CD4-positive, alpha-beta T cell (primary cell): ENCODE measurements at regions of chr15 and their contacts with region 1.

Region 1: GRCh38 chr15:45402162-45402954 is 24.0 kb upstream of the GATM start:
- DNase-seq: peak; percentile 93 to 99 (median 96)
- ATAC-seq: peak; percentile 93
- H3K4me3 ChIP-seq: peak overlapping the region; percentile 77
- H3K4me3 Mint-ChIP-seq: peak overlapping the region; percentile 97
- H3K27ac ChIP-seq: peak overlapping the region; percentile 72 to 88
- H3K27ac Mint-ChIP-seq: peak overlapping the region; percentile 95
- H3K4me1 ChIP-seq: peaks cover 20% of the 10 kb centered on the region
- H3K4me1 Mint-ChIP-seq: peaks cover 43% of the 10 kb centered on the region
- H3K27me3 ChIP-seq: no peaks in the 10 kb centered on the region
- H3K27me3 Mint-ChIP-seq: no peaks in the 10 kb centered on the region
- CTCF ChIP-seq: no peak

Region 2: GRCh38 chr15:45126535-45127158 is 275.7 kb before region 1 on chr15:
- CTCF ChIA-PET with region 1: interaction called, 4 read pairs
- POLR2A ChIA-PET with region 1: interaction called, 3 read pairs
- intact Hi-C with region 1: loop called (anchors 1 to 5 kb)
- DNase-seq: peak in 10 of 14 experiments; percentile 26 to 71 (median 38)
- ATAC-seq: peak; percentile 69
- H3K4me3 ChIP-seq: no peak overlapping the region
- H3K4me3 Mint-ChIP-seq: no peak overlapping the region
- H3K27ac ChIP-seq: no peak overlapping the region
- H3K27ac Mint-ChIP-seq: no peak overlapping the region
- H3K4me1 ChIP-seq: peaks cover 14% of the 10 kb centered on the region
- H3K4me1 Mint-ChIP-seq: peaks cover 7% of the 10 kb centered on the region
- H3K27me3 ChIP-seq: peaks cover 47 to 60% of the 10 kb centered on the region in 2 experiments
- H3K27me3 Mint-ChIP-seq: peaks cover 72% of the 10 kb centered on the region
- CTCF ChIP-seq: peak; percentile 80

Region 3: DNA sequence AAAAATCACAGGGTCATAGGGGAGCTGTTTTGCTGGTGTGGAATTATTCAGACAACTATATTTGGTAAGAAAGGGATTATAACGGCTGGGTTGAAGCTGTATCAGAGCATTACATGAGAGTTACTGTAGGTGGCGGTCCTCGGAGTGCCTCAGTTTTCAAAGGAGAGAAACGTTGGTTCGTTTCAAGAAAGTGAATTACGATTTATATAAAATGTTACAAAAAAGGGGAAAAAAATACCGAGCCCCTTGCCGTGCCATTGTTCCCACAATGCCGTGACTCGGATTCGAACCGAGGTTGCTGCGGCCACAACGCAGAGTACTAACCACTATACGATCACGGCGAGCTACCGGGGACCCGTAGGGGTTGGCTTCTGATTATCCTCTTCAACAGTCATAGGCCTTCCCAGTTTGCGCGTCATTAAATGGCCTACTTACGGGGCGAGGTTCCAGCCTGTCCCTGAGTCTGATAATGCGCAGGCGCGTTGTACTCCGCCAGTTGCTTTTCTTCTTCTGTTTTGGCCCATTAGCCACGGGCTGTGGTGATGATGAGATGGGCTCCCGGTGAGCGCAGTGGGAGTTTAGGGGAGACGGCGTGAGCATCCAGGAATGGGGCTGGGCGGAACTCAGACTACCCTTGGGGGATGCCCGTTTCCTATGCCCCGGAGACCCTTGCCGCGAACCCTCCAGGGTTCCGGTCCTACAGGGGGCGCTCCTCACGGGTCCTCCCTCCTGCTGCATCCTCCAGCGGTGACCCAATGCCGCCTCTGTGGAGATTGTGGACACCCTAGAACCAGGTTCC is 203.8 kb before region 1 on chr15:
- CTCF ChIA-PET with region 1: no interaction called
- POLR2A ChIA-PET with region 1: interaction called, 52 read pairs
- intact Hi-C with region 1: loop called in 1 of 2 experiments (anchors 2 kb)
- DNase-seq: peak; percentile 84 to 99 (median 94)
- ATAC-seq: peak; percentile 61
- H3K4me3 ChIP-seq: peak overlapping the region; percentile 88
- H3K4me3 Mint-ChIP-seq: no peak overlapping the region
- H3K27ac ChIP-seq: peak overlapping the region; percentile 91 to 94
- H3K27ac Mint-ChIP-seq: no peak overlapping the region
- H3K4me1 ChIP-seq: peaks cover 36% of the 10 kb centered on the region
- H3K4me1 Mint-ChIP-seq: no peaks in the 10 kb centered on the region
- H3K27me3 ChIP-seq: no peaks in the 10 kb centered on the region
- H3K27me3 Mint-ChIP-seq: peaks cover 16% of the 10 kb centered on the region
- CTCF ChIP-seq: peak; percentile 46

Region 4: GRCh38 chr15:45279024-45279698 is 123.2 kb before region 1 on chr15:
- CTCF ChIA-PET with region 1: no interaction called
- POLR2A ChIA-PET with region 1: no interaction called
- intact Hi-C with region 1: loop called (anchors 1 to 2 kb)
- DNase-seq: peak; percentile 94 to 99 (median 96)
- ATAC-seq: peak; percentile 99
- H3K4me3 ChIP-seq: peak overlapping the region; percentile 60
- H3K4me3 Mint-ChIP-seq: peak overlapping the region; percentile 89
- H3K27ac ChIP-seq: peak overlapping the region; percentile 66 to 74
- H3K27ac Mint-ChIP-seq: peak overlapping the region; percentile 86
- H3K4me1 ChIP-seq: peaks cover 16% of the 10 kb centered on the region
- H3K4me1 Mint-ChIP-seq: peaks cover 19% of the 10 kb centered on the region
- H3K27me3 ChIP-seq: no peaks in the 10 kb centered on the region
- H3K27me3 Mint-ChIP-seq: peaks cover under 1% of the 10 kb centered on the region
- CTCF ChIP-seq: no peak

Region 5: DNA sequence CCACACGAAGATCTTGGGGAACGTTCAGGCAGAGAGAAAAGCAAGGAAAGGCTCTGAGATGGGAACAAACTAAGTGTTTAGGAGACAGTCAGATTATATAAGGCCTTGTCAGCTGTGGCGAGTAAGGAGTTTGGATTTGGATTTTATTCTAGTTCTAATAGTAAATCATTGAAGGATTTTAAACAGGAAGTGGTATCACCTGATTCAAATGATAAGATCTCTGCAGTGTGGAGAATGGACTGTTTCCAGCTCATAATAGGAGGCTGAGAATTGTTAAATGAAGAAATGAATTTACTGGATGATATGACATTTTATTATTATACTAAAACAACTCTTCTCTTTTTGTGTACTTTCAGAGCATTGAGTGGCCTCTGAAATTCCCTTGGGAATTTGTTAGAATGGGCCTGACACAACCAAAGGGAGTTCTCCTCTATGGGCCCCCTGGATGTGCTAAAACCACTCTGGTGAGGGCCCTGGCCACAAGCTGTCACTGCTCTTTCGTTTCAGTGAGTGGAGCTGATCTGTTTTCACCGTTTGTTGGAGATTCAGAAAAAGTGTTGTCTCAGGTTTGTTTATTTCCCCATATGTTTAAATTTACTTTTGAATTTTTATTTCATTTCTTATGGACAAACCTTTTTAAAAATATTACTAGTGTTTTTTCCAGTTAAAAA is 12.0 kb after region 1 on chr15:
- CTCF ChIA-PET with region 1: interaction called, 3 read pairs
- POLR2A ChIA-PET with region 1: interaction called, 21 read pairs
- intact Hi-C with region 1: no loop called
- DNase-seq: peak in 1 of 14 experiments; percentile 24
- ATAC-seq: no peak
- H3K4me3 ChIP-seq: no peak overlapping the region
- H3K4me3 Mint-ChIP-seq: no peak overlapping the region
- H3K27ac ChIP-seq: no peak overlapping the region
- H3K27ac Mint-ChIP-seq: peak overlapping the region; percentile 10
- H3K4me1 ChIP-seq: peaks cover 12% of the 10 kb centered on the region
- H3K4me1 Mint-ChIP-seq: peaks cover 29% of the 10 kb centered on the region
- H3K27me3 ChIP-seq: no peaks in the 10 kb centered on the region
- H3K27me3 Mint-ChIP-seq: no peaks in the 10 kb centered on the region
- CTCF ChIP-seq: no peak

Region 6: GRCh38 chr15:45457641-45458433 is 55.5 kb after region 1 on chr15:
- CTCF ChIA-PET with region 1: interaction called, 30 read pairs
- POLR2A ChIA-PET with region 1: interaction called, 8 read pairs
- intact Hi-C with region 1: loop called in 1 of 2 experiments (anchors 2 kb)
- DNase-seq: peak; percentile 51 to 91 (median 68)
- ATAC-seq: peak; percentile 65
- H3K4me3 ChIP-seq: peak overlapping the region; percentile 58
- H3K4me3 Mint-ChIP-seq: peak overlapping the region; percentile 89
- H3K27ac ChIP-seq: peak overlapping the region; percentile 38 to 51
- H3K27ac Mint-ChIP-seq: peak overlapping the region; percentile 83
- H3K4me1 ChIP-seq: peaks cover 45% of the 10 kb centered on the region
- H3K4me1 Mint-ChIP-seq: peaks cover 49% of the 10 kb centered on the region
- H3K27me3 ChIP-seq: no peaks in the 10 kb centered on the region
- H3K27me3 Mint-ChIP-seq: no peaks in the 10 kb centered on the region
- CTCF ChIP-seq: peak; percentile 98

Region 7: DNA sequence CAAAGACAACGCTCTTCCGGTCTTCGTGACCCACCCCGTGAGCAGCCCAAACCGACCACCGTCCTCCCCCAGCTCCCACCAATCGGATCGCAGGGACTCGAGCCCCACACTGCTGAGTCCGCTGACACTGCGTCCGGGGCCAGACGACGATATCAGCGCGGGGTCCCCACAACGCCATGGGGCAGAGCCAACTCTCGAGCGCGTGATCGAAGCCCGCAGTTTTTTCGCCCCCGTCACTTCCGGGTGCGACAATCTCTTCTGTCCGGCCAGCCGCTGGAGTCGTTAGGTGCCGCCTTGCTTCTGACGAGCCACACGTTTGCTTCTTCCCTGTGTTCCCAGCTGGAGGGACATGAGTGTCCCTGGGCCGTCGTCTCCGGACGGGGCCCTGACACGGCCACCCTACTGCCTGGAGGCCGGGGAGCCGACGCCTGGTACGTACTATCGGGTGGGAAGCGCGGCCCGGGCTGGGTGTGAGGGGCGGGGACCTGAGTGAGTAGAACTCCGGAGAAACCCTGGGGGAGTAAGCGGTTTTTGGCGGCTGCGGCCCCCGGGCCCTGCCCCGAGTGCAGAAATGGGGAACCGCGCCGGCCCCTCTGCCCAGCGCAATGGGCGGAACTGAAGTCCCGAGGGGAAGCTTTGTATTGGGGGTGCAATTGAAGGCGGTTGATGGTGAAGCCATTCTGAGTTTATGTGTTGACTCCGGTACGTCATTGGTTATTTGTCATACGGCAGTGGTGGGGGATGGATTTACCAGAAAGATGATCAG is 184.9 kb after region 1 on chr15 and contains the start of gene BLOC1S6:
- CTCF ChIA-PET with region 1: no interaction called
- POLR2A ChIA-PET with region 1: interaction called, 74 read pairs
- intact Hi-C with region 1: loop called (anchors 1 kb)
- DNase-seq: peak; percentile 78 to 95 (median 85)
- ATAC-seq: peak; percentile 78
- H3K4me3 ChIP-seq: peak within 1 kb of the TSS; percentile 94
- H3K4me3 Mint-ChIP-seq: peak within 1 kb of the TSS; percentile 99
- H3K27ac ChIP-seq: peak within 1 kb of the TSS; percentile 95 to 99
- H3K27ac Mint-ChIP-seq: peak within 1 kb of the TSS; percentile 100
- H3K4me1 ChIP-seq: peaks cover 21% of the 10 kb centered on the region
- H3K4me1 Mint-ChIP-seq: peaks cover 43% of the 10 kb centered on the region
- H3K27me3 ChIP-seq: no peaks in the 10 kb centered on the region
- H3K27me3 Mint-ChIP-seq: no peaks in the 10 kb centered on the region
- CTCF ChIP-seq: no peak
- total RNA-seq, gene BLOC1S6: 68.5 TPM